ENCODE measurements at regions of chr20 and their contacts with region 1.

Region 1: GRCh38 chr20:8722276-8722928 is 346.5 kb upstream of the PLCB4 start:
- DNase-seq: peak; percentile 64
- ATAC-seq: peak; percentile 28
- H3K4me3 ChIP-seq: no peak overlapping the region
- H3K4me3 Mint-ChIP-seq: no peak overlapping the region
- H3K27ac ChIP-seq: no peak overlapping the region
- H3K27ac Mint-ChIP-seq: no peak overlapping the region
- H3K4me1 ChIP-seq: no peaks in the 10 kb centered on the region
- H3K4me1 Mint-ChIP-seq: no peaks in the 10 kb centered on the region
- H3K27me3 ChIP-seq: no peaks in the 10 kb centered on the region
- H3K27me3 Mint-ChIP-seq: no peaks in the 10 kb centered on the region
- CTCF ChIP-seq: peak; percentile 77

Region 2: DNA sequence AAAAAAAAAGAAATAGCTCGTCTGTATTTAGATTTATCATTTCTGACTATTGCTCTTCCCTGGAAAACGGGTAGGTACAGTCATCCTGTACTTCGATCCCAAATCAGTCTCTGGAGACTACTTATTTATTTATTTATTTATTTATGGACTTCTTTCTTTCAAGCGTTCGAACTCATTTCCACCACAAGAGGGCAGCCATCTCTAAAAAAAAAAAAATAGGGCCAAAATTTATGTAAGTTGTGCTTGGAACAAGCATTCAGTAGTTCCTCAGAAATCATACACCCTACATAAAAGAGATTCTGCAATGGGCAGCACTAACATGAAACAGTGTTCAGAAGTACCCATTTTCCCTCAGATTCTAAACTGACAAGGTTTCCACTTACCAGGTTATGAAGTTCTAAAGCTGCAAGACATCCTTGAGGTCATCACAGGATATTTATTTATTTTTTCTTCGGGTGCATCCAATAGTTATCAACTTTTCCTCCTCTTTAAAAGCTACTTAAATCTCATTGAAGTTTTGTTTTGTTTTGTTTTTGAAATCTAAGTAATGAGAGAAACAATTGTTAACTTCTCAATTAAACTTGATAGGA is 1956.8 kb before region 1 on chr20:
- CTCF ChIA-PET with region 1: interaction called, 21 read pairs
- POLR2A ChIA-PET with region 1: no interaction called
- intact Hi-C with region 1: no loop called
- DNase-seq: peak; percentile 23
- ATAC-seq: no peak
- H3K4me3 ChIP-seq: no peak overlapping the region
- H3K4me3 Mint-ChIP-seq: no peak overlapping the region
- H3K27ac ChIP-seq: no peak overlapping the region
- H3K27ac Mint-ChIP-seq: no peak overlapping the region
- H3K4me1 ChIP-seq: peaks cover 4 to 18% of the 10 kb centered on the region in 2 donors
- H3K4me1 Mint-ChIP-seq: peaks cover 9% of the 10 kb centered on the region
- H3K27me3 ChIP-seq: peaks cover 0 to 29% (median 10%) of the 10 kb centered on the region in 4 experiments
- H3K27me3 Mint-ChIP-seq: peaks cover 32% of the 10 kb centered on the region
- CTCF ChIP-seq: peak; percentile 70

Region 3: DNA sequence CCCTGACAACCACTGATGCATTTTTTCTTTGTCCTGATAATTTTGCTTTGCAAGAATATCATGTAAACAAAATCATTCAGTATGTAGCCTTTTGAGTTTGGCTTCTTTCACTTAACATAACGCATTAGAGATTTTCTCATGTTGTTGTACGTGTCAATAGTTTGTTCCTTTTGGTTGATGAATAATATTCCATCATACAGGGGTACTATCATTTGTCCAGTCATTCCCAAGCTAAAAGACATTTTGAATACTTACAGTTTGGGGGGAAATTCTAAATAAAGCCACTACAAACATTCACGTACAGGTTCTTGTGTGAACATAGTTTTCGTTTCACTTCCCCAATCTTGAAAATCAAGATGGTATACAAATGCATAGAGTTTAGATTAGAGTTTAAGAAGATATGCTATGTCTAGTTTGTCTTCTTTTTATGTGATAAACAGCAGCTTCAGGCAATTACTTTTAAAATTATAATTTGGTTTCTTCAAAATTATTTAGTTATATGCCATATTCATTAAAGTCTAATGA is 787.3 kb before region 1 on chr20:
- CTCF ChIA-PET with region 1: interaction called, 74 read pairs
- POLR2A ChIA-PET with region 1: no interaction called
- intact Hi-C with region 1: no loop called
- DNase-seq: peak; percentile 14
- ATAC-seq: no peak
- H3K4me3 ChIP-seq: no peak overlapping the region
- H3K4me3 Mint-ChIP-seq: no peak overlapping the region
- H3K27ac ChIP-seq: no peak overlapping the region
- H3K27ac Mint-ChIP-seq: no peak overlapping the region
- H3K4me1 ChIP-seq: peaks cover 3 to 6% of the 10 kb centered on the region in 2 donors
- H3K4me1 Mint-ChIP-seq: peaks cover 13% of the 10 kb centered on the region
- H3K27me3 ChIP-seq: no peaks in the 10 kb centered on the region
- H3K27me3 Mint-ChIP-seq: peaks cover 3% of the 10 kb centered on the region
- CTCF ChIP-seq: no peak

Region 4: DNA sequence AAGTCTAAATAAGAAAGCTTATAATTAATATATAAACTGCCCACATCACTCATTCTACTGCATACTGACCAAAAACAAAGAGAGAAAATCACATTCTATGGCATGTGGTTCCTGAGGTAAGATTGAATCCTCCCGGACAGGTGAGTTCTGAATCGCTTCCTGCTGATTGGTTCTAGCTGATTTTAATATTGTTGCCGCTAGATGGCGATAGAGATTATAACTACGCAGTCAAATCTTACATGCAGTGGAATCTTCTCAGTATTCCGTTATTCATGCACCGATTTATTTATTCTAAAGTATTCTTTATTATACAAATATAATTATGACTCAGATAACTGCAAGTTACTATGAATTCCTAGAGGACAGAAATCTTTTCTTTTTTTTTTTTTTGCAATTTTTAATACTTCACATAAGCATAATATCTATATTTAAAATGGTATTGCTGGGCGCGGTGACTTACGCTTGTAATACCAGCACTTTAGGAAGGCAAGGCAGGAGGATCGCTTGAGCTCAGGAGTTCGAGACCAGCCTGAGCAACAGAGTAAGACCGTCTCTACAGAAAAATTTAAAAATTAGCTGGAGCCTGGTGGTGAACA is 678.6 kb before region 1 on chr20:
- CTCF ChIA-PET with region 1: interaction called, 78 read pairs
- POLR2A ChIA-PET with region 1: no interaction called
- intact Hi-C with region 1: no loop called
- DNase-seq: peak; percentile 75
- ATAC-seq: peak; percentile 67
- H3K4me3 ChIP-seq: no peak overlapping the region
- H3K4me3 Mint-ChIP-seq: no peak overlapping the region
- H3K27ac ChIP-seq: no peak overlapping the region
- H3K27ac Mint-ChIP-seq: no peak overlapping the region
- H3K4me1 ChIP-seq: no peaks in the 10 kb centered on the region
- H3K4me1 Mint-ChIP-seq: peaks cover 2% of the 10 kb centered on the region
- H3K27me3 ChIP-seq: no peaks in the 10 kb centered on the region
- H3K27me3 Mint-ChIP-seq: peaks cover 7% of the 10 kb centered on the region
- CTCF ChIP-seq: peak; percentile 94

Region 5: GRCh38 chr20:8709627-8710026 is 12.8 kb before region 1 on chr20:
- CTCF ChIA-PET with region 1: interaction called, 11 read pairs
- POLR2A ChIA-PET with region 1: no interaction called
- intact Hi-C with region 1: no loop called
- DNase-seq: no peak
- ATAC-seq: no peak
- H3K4me3 ChIP-seq: no peak overlapping the region
- H3K4me3 Mint-ChIP-seq: no peak overlapping the region
- H3K27ac ChIP-seq: no peak overlapping the region
- H3K27ac Mint-ChIP-seq: no peak overlapping the region
- H3K4me1 ChIP-seq: no peaks in the 10 kb centered on the region
- H3K4me1 Mint-ChIP-seq: no peaks in the 10 kb centered on the region
- H3K27me3 ChIP-seq: no peaks in the 10 kb centered on the region
- H3K27me3 Mint-ChIP-seq: no peaks in the 10 kb centered on the region
- CTCF ChIP-seq: no peak

Region 6: DNA sequence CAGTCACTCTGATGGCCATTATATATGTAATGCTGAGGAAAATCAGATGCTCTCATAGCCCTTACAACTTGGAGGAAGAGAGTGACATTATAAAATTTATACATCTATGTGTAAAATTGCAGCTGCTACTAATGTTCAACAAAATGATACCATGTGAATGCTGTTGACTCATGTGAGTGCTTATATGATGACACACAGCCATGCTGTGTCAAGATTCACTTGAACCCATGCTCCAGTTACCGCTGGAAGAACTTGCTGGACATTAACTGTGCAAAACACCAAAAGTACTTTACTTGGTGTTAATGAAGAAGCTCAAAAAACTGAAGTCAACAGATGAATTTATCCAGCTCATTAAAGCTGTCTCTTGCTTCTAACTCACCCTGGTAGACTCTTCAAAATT is 27.6 kb after region 1 on chr20:
- CTCF ChIA-PET with region 1: interaction called, 14 read pairs
- POLR2A ChIA-PET with region 1: no interaction called
- intact Hi-C with region 1: no loop called
- DNase-seq: no peak
- ATAC-seq: no peak
- H3K4me3 ChIP-seq: no peak overlapping the region
- H3K4me3 Mint-ChIP-seq: no peak overlapping the region
- H3K27ac ChIP-seq: no peak overlapping the region
- H3K27ac Mint-ChIP-seq: no peak overlapping the region
- H3K4me1 ChIP-seq: no peaks in the 10 kb centered on the region
- H3K4me1 Mint-ChIP-seq: no peaks in the 10 kb centered on the region
- H3K27me3 ChIP-seq: no peaks in the 10 kb centered on the region
- H3K27me3 Mint-ChIP-seq: no peaks in the 10 kb centered on the region
- CTCF ChIP-seq: no peak

Region 7: GRCh38 chr20:8924539-8924938 is 202.1 kb after region 1 on chr20:
- CTCF ChIA-PET with region 1: no interaction called
- POLR2A ChIA-PET with region 1: no interaction called
- intact Hi-C with region 1: no loop called
- DNase-seq: no peak
- ATAC-seq: no peak
- H3K4me3 ChIP-seq: no peak overlapping the region
- H3K4me3 Mint-ChIP-seq: no peak overlapping the region
- H3K27ac ChIP-seq: no peak overlapping the region
- H3K27ac Mint-ChIP-seq: no peak overlapping the region
- H3K4me1 ChIP-seq: no peaks in the 10 kb centered on the region
- H3K4me1 Mint-ChIP-seq: no peaks in the 10 kb centered on the region
- H3K27me3 ChIP-seq: no peaks in the 10 kb centered on the region
- H3K27me3 Mint-ChIP-seq: no peaks in the 10 kb centered on the region
- CTCF ChIP-seq: no peak

Measured in B cell (primary cell).